Astrocyte of the cerebellum (primary cell): ENCODE measurements at regions of chr9 and their contacts with region 1.

Region 1: GRCh38 chr9:117325831-117326230 is 89.0 kb downstream of the ASTN2 start:
- DNase-seq: no peak
- H3K4me3 ChIP-seq: no peak overlapping the region
- CTCF ChIP-seq: no peak

Region 2: GRCh38 chr9:117403403-117403811 is 77.6 kb after region 1 on chr9:
- in situ Hi-C with region 1: loop called (anchors 5 kb)
- DNase-seq: no peak
- H3K4me3 ChIP-seq: no peak overlapping the region
- CTCF ChIP-seq: no peak